ENCODE measurements at regions of chr17 and their contacts with region 1.

Region 1: DNA sequence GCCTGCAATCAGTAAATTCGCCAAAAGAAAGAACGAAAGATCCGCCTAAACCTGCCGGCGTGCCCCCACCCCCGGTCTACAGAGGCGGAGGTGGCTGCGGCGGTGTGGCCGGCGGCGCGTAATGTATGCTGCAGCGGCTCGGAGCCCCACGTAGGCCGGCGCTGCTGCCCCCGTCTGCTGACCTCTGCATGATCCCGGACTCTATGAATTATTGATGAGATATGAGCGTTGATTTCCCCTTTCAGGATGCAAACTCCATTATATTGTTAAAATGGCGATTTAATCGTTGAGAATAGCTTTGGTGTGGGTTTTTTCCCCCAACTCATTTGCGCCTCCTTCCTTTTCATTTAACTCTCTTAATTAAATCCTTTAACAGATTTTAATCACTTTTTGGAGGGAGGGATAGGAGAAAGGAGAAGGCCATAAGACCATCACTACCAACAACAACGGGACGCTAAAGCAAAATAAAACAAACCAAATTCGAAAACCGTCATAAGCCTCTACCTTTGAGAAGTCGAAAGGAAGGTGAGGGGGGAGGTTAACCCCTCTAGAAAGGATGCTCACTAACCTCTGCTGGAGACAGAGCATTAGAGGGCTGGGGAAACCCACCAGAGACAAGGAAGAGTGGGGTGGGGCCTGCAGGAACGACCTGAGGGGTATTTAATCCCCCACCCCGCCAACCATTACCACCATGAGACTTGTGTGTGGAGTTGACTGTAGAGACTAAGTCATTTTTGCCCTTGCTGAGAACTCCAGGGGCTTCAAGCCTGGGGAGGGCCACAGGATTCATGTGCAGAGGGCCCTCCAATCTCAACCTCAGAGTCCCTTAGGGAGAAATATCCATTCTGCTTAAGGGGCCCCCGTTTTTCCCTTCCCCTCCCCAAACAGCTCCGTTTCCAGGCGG is 3.4 kb downstream of the HOXB3 start:
- DNase-seq: no peak
- H3K4me3 ChIP-seq: no peak overlapping the region
- H3K27me3 ChIP-seq: peaks cover 81% of the 10 kb centered on the region
- CTCF ChIP-seq: no peak

Region 2: GRCh38 chr17:48307814-48308411 is 278.7 kb before region 1 on chr17:
- CTCF ChIA-PET with region 1: interaction called, 12 read pairs
- POLR2A ChIA-PET with region 1: no interaction called
- DNase-seq: no peak
- H3K4me3 ChIP-seq: no peak overlapping the region
- H3K27me3 ChIP-seq: peaks cover 27% of the 10 kb centered on the region
- CTCF ChIP-seq: peak; percentile 94

Region 3: GRCh38 chr17:48335858-48336500 is 250.6 kb before region 1 on chr17:
- CTCF ChIA-PET with region 1: interaction called, 16 read pairs
- POLR2A ChIA-PET with region 1: no interaction called
- DNase-seq: peak; percentile 4
- H3K4me3 ChIP-seq: no peak overlapping the region
- H3K27me3 ChIP-seq: peaks cover 7% of the 10 kb centered on the region
- CTCF ChIP-seq: peak; percentile 62

Region 4: GRCh38 chr17:48351831-48352332 is 234.7 kb before region 1 on chr17:
- CTCF ChIA-PET with region 1: interaction called, 11 read pairs
- POLR2A ChIA-PET with region 1: no interaction called
- DNase-seq: no peak
- H3K4me3 ChIP-seq: no peak overlapping the region
- H3K27me3 ChIP-seq: peaks cover 9% of the 10 kb centered on the region
- CTCF ChIP-seq: peak; percentile 64

Region 5: DNA sequence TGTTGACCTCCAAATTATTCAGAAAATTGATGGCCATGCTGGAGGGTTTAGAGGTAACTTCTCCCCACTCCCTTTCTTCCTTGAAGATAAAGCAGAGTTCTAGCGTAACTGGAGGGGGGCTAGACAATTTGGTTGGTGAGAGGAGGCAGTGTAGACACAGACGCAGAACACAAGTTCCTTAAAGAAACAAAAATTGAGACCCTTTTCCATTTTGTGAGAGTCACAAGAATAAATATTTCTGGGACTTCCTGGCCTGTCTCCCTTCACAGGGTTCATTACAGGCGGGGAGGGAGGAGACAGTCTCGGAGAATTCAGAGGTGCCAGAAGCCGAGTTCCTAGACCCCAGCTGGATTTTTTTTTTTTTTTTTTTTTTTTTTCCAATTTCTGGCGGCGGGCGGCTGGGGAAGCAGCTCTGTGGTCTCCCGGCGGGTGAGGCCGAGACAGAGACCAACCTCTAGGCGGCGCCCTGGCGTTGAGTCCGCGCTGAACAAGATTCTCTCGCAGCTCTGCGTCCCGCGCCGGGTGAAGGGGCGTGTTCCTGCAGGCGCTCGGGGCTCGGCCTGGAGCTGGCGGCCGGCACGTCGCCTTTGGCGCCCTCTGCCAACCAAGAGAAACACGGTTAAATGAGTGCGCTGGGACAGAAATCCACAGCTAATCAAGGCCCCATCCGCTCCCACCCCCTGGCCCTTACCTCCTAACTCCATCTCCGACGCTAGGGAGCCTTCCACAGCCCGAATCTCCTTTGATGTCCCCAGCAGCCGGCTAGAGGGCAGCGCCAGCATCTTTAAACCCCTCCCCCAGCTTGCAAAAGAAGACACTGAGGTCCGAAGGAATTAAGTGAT is 49.8 kb after region 1 on chr17:
- CTCF ChIA-PET with region 1: no interaction called
- POLR2A ChIA-PET with region 1: no interaction called
- DNase-seq: no peak
- H3K4me3 ChIP-seq: no peak overlapping the region
- H3K27me3 ChIP-seq: peaks cover 76% of the 10 kb centered on the region
- CTCF ChIP-seq: peak; percentile 56